ENCODE measurements at regions of chr1 and their contacts with region 1.

Region 1: DNA sequence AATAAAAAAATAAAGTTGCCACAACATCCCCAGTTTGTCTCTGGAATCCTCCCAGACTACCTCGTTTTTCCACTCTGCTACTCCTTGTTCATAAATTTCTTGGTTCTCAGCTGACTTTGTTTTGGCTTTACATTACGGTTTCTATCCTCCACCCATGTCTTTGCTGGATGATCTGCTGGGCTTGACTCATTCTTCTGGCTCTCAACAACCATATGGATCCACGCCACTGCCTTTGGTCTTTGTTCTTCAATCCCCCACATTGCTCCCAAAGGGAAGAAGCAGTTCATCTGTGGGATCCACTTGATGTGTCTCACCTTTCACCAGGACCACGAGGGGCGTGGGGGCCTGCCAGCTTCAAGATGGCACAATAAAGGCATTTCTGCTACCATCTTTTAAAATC is 67.1 kb upstream of the NBL1 start:
- DNase-seq: no peak
- ATAC-seq: no peak
- H3K4me3 ChIP-seq: no peak overlapping the region
- H3K27ac ChIP-seq: no peak overlapping the region
- H3K4me1 ChIP-seq: peaks cover 0 to 8% (median 0%) of the 10 kb centered on the region in 12 donors
- H3K27me3 ChIP-seq: no peaks in the 10 kb centered on the region
- CTCF ChIP-seq: no peak
- POLR2A ChIP-seq: no peak

Region 2: DNA sequence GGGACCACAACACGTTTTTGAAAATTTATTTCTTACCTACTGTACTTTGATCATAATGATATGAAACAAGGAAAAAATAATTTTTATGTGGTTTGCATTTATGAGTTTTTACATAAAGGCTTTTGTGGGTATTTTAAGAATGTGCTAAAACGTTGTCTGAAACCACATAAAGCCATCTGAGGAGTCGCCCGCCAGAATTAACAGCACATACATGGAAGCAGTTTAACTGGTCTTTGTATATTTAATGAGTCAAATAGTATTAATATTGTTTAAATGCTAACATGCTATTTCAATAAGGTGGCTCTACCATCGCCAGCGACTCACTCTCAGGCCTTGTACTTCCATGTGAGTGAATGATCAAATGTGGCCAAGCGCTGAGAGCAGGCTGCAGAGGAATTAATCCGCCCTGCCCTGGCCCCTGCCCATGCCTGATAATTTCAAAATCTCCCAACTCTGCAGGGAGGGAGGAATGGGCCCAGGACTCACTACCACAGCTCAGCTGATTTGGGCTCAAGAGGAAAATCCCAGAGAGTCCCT is 215.4 kb before region 1 on chr1:
- intact Hi-C with region 1: no loop called
- DNase-seq: no peak
- ATAC-seq: no peak
- H3K4me3 ChIP-seq: no peak overlapping the region
- H3K27ac ChIP-seq: no peak overlapping the region
- H3K4me1 ChIP-seq: peaks cover 0 to 34% (median 15%) of the 10 kb centered on the region in 12 donors
- H3K27me3 ChIP-seq: no peaks in the 10 kb centered on the region
- CTCF ChIP-seq: no peak
- POLR2A ChIP-seq: no peak

Region 3: GRCh38 chr1:19514391-19514831 is 62.6 kb before region 1 on chr1:
- intact Hi-C with region 1: loop called in 1 of 10 experiments (anchors 10 kb)
- DNase-seq: peak; percentile 54 to 73 (median 68)
- ATAC-seq: peak; percentile 84 to 88 (median 86)
- H3K4me3 ChIP-seq: no peak overlapping the region
- H3K27ac ChIP-seq: peak overlapping the region in 11 of 12 donors; percentile 36 to 85 (median 54)
- H3K4me1 ChIP-seq: peaks cover 0 to 37% (median 2%) of the 10 kb centered on the region in 12 donors
- H3K27me3 ChIP-seq: no peaks in the 10 kb centered on the region
- CTCF ChIP-seq: no peak
- POLR2A ChIP-seq: no peak

Measured in heart left ventricle (tissue), 16 donors.